Activated CD8-positive, alpha-beta memory T cell treated with anti-CD3 and anti-CD28 coated beads, Interleukin-2, amount 10 ng/mL, durations not matched to agents 7 days and 5 days (primary cell): ENCODE measurements at regions of chr19 and their contacts with region 1.

Region 1: DNA sequence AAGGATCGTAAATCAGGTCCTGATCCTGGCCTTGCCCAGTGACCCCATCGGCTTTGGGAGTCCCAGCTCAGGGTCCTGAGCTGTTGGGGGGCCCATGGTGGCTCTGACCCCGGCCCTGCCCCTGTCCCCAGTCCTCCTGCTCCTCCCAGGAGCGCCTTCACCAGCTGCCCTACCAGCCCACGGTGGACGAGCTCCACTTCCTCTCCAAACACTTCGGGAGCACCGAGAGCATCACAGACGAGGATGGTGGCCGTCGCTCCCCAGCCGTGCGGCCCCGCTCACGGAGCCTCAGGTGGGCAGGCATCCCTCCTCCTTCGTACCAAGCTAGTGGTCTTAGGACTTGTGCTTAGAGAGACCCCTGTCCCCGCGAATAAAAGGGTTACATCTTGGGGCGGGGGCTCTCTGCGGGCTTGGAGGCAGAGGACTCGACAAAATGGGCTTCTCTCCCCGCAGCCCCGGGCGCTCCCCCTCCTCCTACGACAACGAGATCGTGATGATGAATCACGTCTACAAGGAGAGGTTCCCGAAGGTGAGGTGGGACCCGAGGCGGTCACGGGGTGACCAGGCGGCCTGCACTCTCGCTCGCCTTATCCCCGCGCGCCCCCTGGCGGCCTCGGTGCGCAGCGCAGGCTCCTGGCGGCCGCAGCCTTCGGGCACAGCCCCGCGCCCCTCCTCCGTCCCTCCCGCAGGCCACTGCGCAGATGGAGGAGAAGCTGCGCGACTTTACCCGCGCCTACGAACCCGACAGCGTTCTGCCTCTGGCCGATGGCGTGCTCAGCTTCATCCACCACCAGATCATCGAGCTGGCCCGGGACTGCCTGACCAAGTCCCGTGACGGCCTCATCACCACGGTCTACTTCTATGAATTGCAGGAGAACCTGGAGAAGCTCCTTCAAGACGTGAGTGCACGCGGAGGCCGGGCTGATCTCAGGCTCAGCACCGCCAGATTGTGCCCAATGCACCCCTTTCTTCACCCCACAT is 9.1 kb downstream of the MAST1 start:
- DNase-seq: peak; percentile 87
- ATAC-seq: peak; percentile 97
- H3K4me3 Mint-ChIP-seq: peak overlapping the region; percentile 35
- H3K27ac Mint-ChIP-seq: no peak overlapping the region
- H3K4me1 Mint-ChIP-seq: peaks cover 8% of the 10 kb centered on the region
- H3K27me3 Mint-ChIP-seq: peaks cover 22% of the 10 kb centered on the region

Region 2: DNA sequence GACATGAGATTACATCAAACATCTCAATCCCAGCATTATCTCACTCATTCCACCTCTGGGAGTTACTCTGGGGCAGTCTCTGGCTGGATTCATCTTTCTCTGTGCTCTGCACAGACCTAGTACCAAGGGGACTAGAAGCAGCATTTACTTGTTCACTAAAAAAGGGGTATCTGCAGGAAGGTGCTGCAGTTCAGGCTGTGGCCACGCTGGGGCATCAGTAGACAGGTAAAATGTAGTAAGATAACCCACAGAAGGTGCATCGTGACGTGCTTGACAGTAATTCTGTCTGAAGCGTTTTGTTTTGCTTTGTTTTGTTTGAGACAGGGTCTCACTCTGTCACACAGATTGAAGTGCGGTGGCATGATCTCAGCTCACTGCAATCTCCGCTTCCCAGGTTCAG is 325.5 kb before region 1 on chr19:
- CTCF ChIA-PET with region 1: no interaction called
- DNase-seq: no peak
- ATAC-seq: no peak
- H3K4me3 Mint-ChIP-seq: no peak overlapping the region
- H3K27ac Mint-ChIP-seq: no peak overlapping the region
- H3K4me1 Mint-ChIP-seq: no peaks in the 10 kb centered on the region
- H3K27me3 Mint-ChIP-seq: no peaks in the 10 kb centered on the region

Region 3: GRCh38 chr19:12687496-12688196 is 159.8 kb before region 1 on chr19 and contains the start of gene GNG14:
- CTCF ChIA-PET with region 1: no interaction called
- DNase-seq: no peak
- ATAC-seq: no peak
- H3K4me3 Mint-ChIP-seq: no peak within 1 kb of the TSS
- H3K27ac Mint-ChIP-seq: no peak within 1 kb of the TSS
- H3K4me1 Mint-ChIP-seq: peaks cover 2% of the 10 kb centered on the region
- H3K27me3 Mint-ChIP-seq: no peaks in the 10 kb centered on the region
- total RNA-seq, gene GNG14: not detected

Region 4: DNA sequence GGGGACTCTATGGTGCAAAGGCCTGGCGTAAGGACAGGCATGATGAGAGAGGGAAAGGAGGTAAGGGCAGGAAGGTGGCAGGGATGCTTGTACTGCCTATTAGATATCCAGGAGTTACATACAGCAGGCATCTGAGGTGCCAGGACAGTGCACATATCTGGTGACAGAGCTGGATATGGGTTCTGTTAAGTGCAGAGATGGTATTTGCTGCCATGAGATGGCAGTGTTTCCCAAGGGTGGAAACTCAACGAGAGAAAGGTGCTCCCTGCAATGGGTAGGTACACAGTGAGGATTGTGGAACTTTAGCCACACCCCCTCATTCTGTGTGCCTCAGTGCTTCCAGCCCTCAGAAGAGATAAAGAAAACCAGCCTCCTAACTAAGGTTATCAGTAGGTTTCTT is 130.6 kb before region 1 on chr19:
- CTCF ChIA-PET with region 1: interaction called, 19 read pairs
- DNase-seq: peak; percentile 60
- ATAC-seq: peak; percentile 60
- H3K4me3 Mint-ChIP-seq: no peak overlapping the region
- H3K27ac Mint-ChIP-seq: no peak overlapping the region
- H3K4me1 Mint-ChIP-seq: peaks cover 28% of the 10 kb centered on the region
- H3K27me3 Mint-ChIP-seq: no peaks in the 10 kb centered on the region

Region 5: GRCh38 chr19:12777217-12778016 is 70.0 kb before region 1 on chr19:
- CTCF ChIA-PET with region 1: interaction called, 27 read pairs
- DNase-seq: peak; percentile 87
- ATAC-seq: peak; percentile 41
- H3K4me3 Mint-ChIP-seq: peak overlapping the region; percentile 76
- H3K27ac Mint-ChIP-seq: peak overlapping the region; percentile 97
- H3K4me1 Mint-ChIP-seq: peaks cover 37% of the 10 kb centered on the region
- H3K27me3 Mint-ChIP-seq: no peaks in the 10 kb centered on the region

Region 6: DNA sequence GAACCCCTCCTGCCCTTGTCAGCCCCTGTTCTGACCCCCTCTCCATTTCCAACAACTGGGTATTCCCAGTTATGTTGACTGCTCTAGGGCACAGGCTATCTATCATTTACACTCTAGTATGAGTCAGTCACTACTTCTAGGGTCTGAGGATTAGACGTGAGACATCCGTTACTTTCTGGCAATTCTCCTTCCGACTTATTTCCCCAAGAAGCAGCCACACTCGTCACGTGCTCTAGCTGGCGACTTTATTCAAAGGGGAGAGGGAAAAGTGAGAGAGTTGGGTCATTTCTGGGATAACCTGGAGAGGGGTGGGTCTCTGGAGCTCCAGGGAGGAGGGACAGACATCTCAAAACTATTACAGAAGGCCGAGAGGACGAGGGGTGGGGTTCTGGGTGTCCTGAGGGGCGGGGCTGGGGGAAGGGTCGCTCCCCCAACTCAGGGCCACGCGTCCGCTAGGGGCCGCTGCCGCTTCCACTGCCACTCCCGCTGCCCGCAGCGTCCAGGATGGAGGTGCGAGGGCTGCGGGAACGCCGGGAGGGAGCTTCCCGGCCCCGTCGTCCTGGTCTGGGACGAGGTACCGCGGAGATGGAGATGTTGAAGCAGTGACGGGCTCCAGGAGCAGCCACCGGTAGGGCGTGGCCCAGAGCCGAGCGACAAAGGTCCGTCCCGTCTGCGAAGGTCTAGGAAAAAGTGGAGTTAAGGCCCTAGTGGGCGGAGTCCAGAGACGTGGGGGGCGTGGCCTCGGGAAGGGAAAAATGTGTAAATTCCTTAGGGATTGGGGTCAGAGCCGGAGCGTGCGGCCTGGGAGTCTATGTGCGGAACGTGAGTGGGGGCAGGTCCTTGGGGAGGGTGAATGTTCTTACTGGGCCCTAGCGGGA is 22.0 kb before region 1 on chr19:
- CTCF ChIA-PET with region 1: interaction called, 17 read pairs
- DNase-seq: no peak
- ATAC-seq: no peak
- H3K4me3 Mint-ChIP-seq: no peak overlapping the region
- H3K27ac Mint-ChIP-seq: no peak overlapping the region
- H3K4me1 Mint-ChIP-seq: peaks cover 11% of the 10 kb centered on the region
- H3K27me3 Mint-ChIP-seq: peaks cover 37% of the 10 kb centered on the region

Region 7: DNA sequence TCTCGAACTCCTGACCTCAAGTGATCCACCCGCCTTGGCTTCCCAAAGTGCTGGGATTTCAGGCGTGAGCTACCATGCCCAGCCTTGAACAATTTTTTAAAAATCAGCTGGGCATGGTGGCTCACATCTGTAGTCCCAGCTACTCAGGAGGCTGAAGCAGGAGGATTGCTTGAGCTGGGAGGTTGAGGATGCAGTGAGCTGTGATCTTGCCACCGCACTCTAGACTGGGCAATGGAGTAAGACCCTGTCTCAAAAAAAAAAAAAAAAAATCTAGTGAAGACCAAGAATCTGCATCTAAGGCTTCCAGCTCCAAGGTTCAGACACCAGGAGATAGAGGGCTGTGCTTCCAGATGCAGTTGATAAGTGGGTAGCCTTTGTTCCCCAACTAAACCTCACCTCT is 16.7 kb after region 1 on chr19:
- CTCF ChIA-PET with region 1: interaction called, 24 read pairs
- DNase-seq: no peak
- ATAC-seq: no peak
- H3K4me3 Mint-ChIP-seq: no peak overlapping the region
- H3K27ac Mint-ChIP-seq: no peak overlapping the region
- H3K4me1 Mint-ChIP-seq: peaks cover 8% of the 10 kb centered on the region
- H3K27me3 Mint-ChIP-seq: peaks cover 5% of the 10 kb centered on the region

Region 8: GRCh38 chr19:12890787-12891552 is 43.5 kb after region 1 on chr19 and contains the start of gene GCDH:
- CTCF ChIA-PET with region 1: interaction called, 13 read pairs
- DNase-seq: peak; percentile 99
- ATAC-seq: peak; percentile 96
- H3K4me3 Mint-ChIP-seq: peak within 1 kb of the TSS; percentile 99
- H3K27ac Mint-ChIP-seq: peak within 1 kb of the TSS; percentile 90
- H3K4me1 Mint-ChIP-seq: peaks cover 30% of the 10 kb centered on the region
- H3K27me3 Mint-ChIP-seq: no peaks in the 10 kb centered on the region
- total RNA-seq, gene GCDH: 38.7 to 46.1 TPM

Region 9: GRCh38 chr19:13104360-13104847 is 257.0 kb after region 1 on chr19:
- CTCF ChIA-PET with region 1: no interaction called
- DNase-seq: peak; percentile 72
- ATAC-seq: peak; percentile 38
- H3K4me3 Mint-ChIP-seq: peak overlapping the region; percentile 78
- H3K27ac Mint-ChIP-seq: peak overlapping the region; percentile 83
- H3K4me1 Mint-ChIP-seq: peaks cover 30% of the 10 kb centered on the region
- H3K27me3 Mint-ChIP-seq: peaks cover 5% of the 10 kb centered on the region